ENCODE measurements at regions of chr10 and their contacts with region 1.

Region 1: GRCh38 chr10:28179006-28179742 is 123.7 kb downstream of the MPP7 start:
- DNase-seq: peak in 5 of 7 donors; percentile 15 to 40 (median 32)
- H3K4me3 ChIP-seq: peak overlapping the region in 1 of 4 donors; percentile 33
- H3K27ac ChIP-seq: no peak overlapping the region
- H3K4me1 ChIP-seq: peaks cover 0 to 11% of the 10 kb centered on the region in 2 donors
- H3K27me3 ChIP-seq: no peaks in the 10 kb centered on the region
- CTCF ChIP-seq: peak; percentile 56 to 89 (median 76)
- POLR2A ChIP-seq: no peak

Region 2: DNA sequence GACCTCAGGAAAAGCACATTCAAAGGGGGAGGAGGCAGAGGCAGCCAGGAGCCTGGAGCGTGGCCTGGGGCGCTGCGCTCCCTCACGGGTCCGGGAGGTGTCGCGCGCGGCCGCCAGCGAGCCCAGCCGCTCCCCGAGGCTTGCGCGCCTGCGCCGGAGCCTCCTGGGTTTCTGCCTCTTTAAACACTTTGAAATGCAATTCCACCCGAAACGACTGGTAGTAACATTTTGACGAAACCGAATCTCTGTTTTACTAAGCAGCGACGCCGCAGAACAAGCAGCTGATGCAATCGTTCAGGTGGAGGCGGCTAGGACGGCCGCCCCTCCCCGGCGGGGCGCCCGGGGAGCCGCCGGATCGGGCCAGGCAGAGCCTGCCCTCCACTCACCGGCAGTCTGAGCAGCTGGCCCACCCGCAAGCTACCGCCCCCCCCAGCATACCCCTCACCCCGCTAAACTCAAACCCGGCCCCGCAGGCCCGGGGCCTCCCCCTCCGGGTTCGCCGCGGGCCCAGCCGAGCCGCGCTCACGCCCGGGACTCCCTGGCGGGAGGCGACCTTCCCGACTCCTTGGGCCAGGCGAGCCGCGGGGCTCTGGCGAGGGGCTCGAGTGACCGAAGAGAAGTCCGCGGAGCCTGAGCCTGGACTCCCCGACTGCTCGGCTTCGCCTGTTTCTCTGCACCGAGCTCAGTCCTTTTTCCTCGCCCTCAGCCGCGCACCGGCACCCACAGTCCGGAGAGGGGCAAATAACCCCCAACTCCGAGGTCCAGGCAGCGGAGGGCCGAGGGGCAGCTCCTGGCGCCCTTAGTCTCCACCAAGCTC is 436.8 kb before region 1 on chr10:
- intact Hi-C with region 1: loop called in 1 of 2 experiments (anchors 5 kb)
- DNase-seq: peak; percentile 80 to 89 (median 82)
- H3K4me3 ChIP-seq: peak overlapping the region in 2 of 4 donors; percentile 32 to 72
- H3K27ac ChIP-seq: peak overlapping the region in 4 of 5 donors; percentile 54 to 93 (median 84)
- H3K4me1 ChIP-seq: peaks cover 16 to 47% of the 10 kb centered on the region in 2 donors
- H3K27me3 ChIP-seq: peaks cover 56% of the 10 kb centered on the region
- CTCF ChIP-seq: peak; percentile 45 to 81 (median 68)
- POLR2A ChIP-seq: peak; percentile 13 to 76

Region 3: DNA sequence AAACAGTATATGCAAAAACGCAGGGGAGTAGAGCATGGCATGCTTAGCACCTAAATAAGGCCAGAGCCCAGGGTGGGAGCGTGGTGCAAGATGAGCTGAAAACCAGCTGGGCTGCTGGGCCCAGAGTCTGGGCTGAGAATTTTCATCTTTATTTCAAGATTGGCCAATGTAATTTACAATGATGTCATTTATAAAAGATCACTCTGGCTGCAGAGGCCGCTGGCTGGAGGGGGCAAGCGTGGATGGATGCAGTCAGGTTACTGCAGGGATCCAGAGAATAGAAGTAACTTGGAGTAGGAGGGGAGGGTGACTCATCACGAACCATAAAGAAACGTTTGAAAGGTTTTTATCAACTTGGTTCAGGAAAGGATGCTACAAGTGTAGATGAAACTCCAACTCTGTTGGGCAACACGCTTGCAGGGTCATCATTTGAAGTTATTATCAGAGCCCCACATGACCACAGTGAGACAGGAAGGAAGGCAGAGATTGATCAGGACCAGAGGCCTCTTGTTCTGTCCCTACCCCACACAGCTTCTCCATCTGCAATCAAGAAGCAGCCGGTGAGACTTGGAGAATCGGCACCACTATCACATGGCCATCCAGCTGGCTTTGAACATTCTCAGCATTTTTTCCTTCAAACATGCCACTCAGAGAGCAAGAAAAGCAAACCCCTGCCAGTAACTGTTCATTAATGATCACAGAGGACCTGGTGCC is 229.5 kb before region 1 on chr10:
- intact Hi-C with region 1: no loop called
- DNase-seq: no peak
- H3K4me3 ChIP-seq: no peak overlapping the region
- H3K27ac ChIP-seq: no peak overlapping the region
- H3K4me1 ChIP-seq: no peaks in the 10 kb centered on the region
- H3K27me3 ChIP-seq: no peaks in the 10 kb centered on the region
- CTCF ChIP-seq: no peak
- POLR2A ChIP-seq: no peak